GM10248 (cell line): ENCODE measurements at regions of chr5 and their contacts with region 1.

Region 1: GRCh38 chr5:179832083-179832745 is 11.5 kb downstream of the SQSTM1 start:
- DNase-seq: no peak
- CTCF ChIP-seq: no peak

Region 2: GRCh38 chr5:179821581-179822432 is 10.4 kb before region 1 on chr5:
- CTCF ChIA-PET with region 1: interaction called, 3 read pairs
- POLR2A ChIA-PET with region 1: interaction called, 13 read pairs
- DNase-seq: peak; percentile 91
- CTCF ChIP-seq: no peak